ENCODE measurements at regions of chr5 and their contacts with region 1.

Region 1: DNA sequence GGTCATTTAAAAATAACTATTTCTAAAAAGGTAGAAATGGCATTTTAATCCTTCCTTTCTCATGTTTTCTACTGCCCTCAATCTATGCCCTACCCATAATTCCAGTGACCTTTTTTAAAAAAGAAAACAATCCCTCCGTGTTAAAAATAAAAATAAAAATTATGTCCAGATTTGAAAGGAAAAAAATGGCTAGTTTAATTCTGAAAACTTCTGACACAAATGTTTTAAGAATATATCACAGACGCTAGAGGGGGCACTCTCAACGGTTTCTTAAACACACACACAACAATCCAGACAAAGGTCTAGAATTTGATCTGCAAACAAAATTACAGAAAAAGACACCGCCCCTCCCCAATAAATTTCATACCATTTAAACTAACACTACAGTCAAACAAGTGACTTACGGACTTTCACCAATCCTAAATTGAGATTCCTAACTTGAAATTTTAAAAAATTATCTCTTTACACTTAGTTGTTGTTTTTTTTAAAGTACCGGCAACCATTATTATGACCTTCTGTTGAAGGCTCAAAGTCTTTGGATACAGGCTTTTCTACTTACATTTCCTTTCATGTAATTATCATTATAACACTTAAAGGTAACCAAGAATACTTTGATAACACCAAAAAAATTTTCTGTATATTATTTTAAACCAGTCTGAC is 38.2 kb downstream of the CLINT1 start:
- DNase-seq: peak; percentile 71
- H3K4me3 Mint-ChIP-seq: no peak overlapping the region
- H3K27ac Mint-ChIP-seq: no peak overlapping the region
- H3K4me1 Mint-ChIP-seq: peaks cover 17% of the 10 kb centered on the region
- H3K27me3 Mint-ChIP-seq: no peaks in the 10 kb centered on the region

Region 2: GRCh38 chr5:157917899-157918809 is 97.4 kb after region 1 on chr5:
- intact Hi-C with region 1: loop called (anchors 1 kb)
- DNase-seq: peak; percentile 87
- H3K4me3 Mint-ChIP-seq: peak overlapping the region; percentile 76
- H3K27ac Mint-ChIP-seq: no peak overlapping the region
- H3K4me1 Mint-ChIP-seq: peaks cover 28% of the 10 kb centered on the region
- H3K27me3 Mint-ChIP-seq: no peaks in the 10 kb centered on the region

Region 3: GRCh38 chr5:157948738-157949410 is 128.2 kb after region 1 on chr5:
- intact Hi-C with region 1: loop called (anchors 1 kb)
- DNase-seq: peak; percentile 94
- H3K4me3 Mint-ChIP-seq: no peak overlapping the region
- H3K27ac Mint-ChIP-seq: no peak overlapping the region
- H3K4me1 Mint-ChIP-seq: peaks cover 3% of the 10 kb centered on the region
- H3K27me3 Mint-ChIP-seq: peaks cover 12% of the 10 kb centered on the region

Region 4: GRCh38 chr5:157994906-157995519 is 174.3 kb after region 1 on chr5:
- intact Hi-C with region 1: loop called (anchors 2 kb)
- DNase-seq: peak; percentile 85
- H3K4me3 Mint-ChIP-seq: peak overlapping the region; percentile 56
- H3K27ac Mint-ChIP-seq: no peak overlapping the region
- H3K4me1 Mint-ChIP-seq: peaks cover 15% of the 10 kb centered on the region
- H3K27me3 Mint-ChIP-seq: peaks cover 35% of the 10 kb centered on the region